ENCODE measurements at regions of chr12 and their contacts with region 1.

Region 1: DNA sequence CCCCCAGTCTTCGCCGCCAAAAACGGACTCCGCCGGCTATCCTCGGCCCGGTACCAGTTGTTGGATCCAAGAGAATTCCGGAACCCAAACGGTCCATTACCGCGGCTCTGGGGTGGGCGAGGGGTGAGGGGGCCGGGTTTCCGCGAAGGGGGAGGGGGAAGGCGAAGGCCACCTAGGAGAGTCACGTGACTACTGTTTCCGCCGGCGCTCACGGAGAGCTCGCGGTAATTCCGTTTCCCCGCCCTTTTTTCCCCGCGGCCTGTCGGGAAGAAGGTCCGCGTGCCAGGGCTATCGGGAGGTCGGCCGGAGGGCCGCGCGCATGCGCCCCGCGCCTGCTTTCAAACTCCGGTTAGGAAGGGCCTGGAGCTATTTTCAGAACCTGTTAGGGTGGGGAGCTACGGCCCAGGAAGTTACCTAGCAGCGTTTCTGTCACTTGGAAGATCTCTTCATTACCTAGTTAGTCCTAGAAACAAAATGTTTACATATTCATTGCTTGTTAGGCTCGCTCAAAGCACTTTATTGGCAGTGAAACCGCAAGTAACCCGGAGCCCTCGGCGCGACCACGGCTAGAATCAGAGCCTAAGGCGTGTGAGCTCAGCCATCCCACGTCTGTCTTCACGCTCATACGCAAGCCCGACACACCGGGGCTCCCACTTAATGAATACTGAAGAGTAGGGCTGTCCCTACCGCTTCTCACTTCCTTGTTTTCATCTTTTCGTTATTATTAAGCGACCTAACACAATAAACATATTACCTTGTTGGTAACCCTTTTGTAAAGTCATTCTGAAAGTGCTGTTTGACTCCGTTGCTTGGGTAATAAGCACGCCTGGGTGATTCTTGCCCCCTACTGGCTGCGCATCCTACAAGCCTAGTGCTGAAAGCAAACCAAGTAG is 624 bp upstream of the SBNO1 start:
- DNase-seq: peak; percentile 99
- H3K4me3 Mint-ChIP-seq: peak overlapping the region; percentile 90
- H3K27ac Mint-ChIP-seq: peak overlapping the region; percentile 99
- H3K4me1 Mint-ChIP-seq: peaks cover 14% of the 10 kb centered on the region
- H3K27me3 Mint-ChIP-seq: no peaks in the 10 kb centered on the region

Region 2: GRCh38 chr12:122526683-122527477 is 838.4 kb before region 1 on chr12 and contains the starts of genes KNTC1 and RSRC2:
- intact Hi-C with region 1: loop called (anchors 2 kb)
- DNase-seq: peak; percentile 99
- H3K4me3 Mint-ChIP-seq: no peak within 1 kb of the TSS
- H3K27ac Mint-ChIP-seq: no peak within 1 kb of the TSS
- H3K4me1 Mint-ChIP-seq: peaks cover 36% of the 10 kb centered on the region
- H3K27me3 Mint-ChIP-seq: no peaks in the 10 kb centered on the region
- total RNA-seq, gene KNTC1: 128 and 129 TPM in 2 replicates
- total RNA-seq, gene RSRC2: 99.7 and 101 TPM in 2 replicates

Region 3: DNA sequence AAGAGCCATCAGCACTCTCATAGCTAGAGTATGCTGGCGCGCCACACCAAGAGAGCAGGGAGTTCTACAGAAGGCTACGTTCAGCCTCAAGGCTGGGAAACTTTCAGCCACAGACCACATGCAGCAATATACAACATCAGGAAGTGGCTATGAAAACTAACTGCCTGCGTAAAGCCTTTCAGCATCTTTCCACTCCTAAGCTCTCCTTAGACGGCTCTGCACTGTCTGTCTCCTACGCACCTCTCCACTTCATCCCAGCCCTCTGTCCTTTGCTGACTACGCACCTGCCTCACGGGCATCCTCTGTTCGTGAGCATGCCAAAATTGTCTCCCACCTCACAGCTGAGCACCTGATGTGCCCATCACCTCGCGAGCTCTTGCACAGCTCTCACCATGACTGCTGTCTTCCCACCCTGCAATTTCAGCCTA is 142.0 kb before region 1 on chr12:
- intact Hi-C with region 1: loop called (anchors 2 kb)
- DNase-seq: peak; percentile 91
- H3K4me3 Mint-ChIP-seq: peak overlapping the region; percentile 75
- H3K27ac Mint-ChIP-seq: peak overlapping the region; percentile 95
- H3K4me1 Mint-ChIP-seq: peaks cover 34% of the 10 kb centered on the region
- H3K27me3 Mint-ChIP-seq: no peaks in the 10 kb centered on the region

Region 4: GRCh38 chr12:123278101-123278627 is 87.1 kb before region 1 on chr12:
- intact Hi-C with region 1: loop called (anchors 2 kb)
- DNase-seq: peak; percentile 69
- H3K4me3 Mint-ChIP-seq: peak overlapping the region; percentile 36
- H3K27ac Mint-ChIP-seq: peak overlapping the region; percentile 83
- H3K4me1 Mint-ChIP-seq: peaks cover 4% of the 10 kb centered on the region
- H3K27me3 Mint-ChIP-seq: no peaks in the 10 kb centered on the region

Region 5: DNA sequence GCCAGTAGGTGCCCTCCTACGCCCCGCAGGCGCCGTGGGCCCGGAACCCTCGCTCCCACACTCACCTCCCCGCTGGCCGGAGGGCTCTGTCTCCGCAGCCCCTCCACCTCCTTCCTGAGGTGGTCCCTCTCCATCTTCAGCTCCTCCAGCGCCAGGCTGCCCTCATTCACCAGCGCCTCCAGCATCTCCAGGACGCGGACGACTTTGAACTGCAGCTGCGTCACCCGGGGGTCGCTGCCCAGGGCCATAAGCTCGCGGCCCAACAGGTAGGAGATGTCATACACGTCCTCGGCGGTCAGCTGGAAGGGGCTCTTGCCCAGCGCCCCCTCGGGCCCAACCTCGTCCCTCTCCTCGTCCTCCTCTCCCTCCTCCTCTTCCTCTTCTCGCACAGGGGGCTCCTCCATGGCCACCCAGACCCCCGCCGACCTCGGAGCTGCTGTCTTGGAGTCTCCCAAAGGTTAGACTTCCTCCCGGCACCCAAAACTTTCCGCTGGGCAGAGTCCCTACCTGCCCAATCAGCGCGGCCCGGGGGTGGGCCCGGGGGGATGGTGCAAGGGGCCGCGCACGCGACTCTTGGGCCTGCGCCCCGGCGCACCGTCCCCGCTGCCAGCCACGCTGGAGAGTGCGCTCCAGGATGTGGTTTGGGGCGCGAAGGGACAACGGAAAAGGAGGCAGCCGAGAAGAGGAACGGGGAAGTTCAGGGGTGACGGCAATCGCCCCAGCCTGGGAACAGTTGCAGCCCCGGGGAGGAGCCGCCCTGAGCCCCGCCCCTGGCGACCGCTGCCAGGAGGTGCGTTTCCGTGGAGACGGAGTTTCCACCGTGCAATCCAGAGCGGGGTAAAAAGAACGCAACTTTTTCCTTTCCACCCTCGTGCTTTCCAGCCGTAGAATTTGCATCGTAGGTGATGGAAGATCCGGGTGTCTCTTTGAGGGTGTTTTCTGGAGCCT is 71.0 kb after region 1 on chr12 and contains the start of gene RILPL2:
- intact Hi-C with region 1: loop called (anchors 2 kb)
- DNase-seq: peak; percentile 98
- H3K4me3 Mint-ChIP-seq: peak within 1 kb of the TSS; percentile 99
- H3K27ac Mint-ChIP-seq: peak within 1 kb of the TSS; percentile 99
- H3K4me1 Mint-ChIP-seq: peaks cover 35% of the 10 kb centered on the region
- H3K27me3 Mint-ChIP-seq: no peaks in the 10 kb centered on the region
- total RNA-seq, gene RILPL2: 17.2 TPM in 2 replicates

Region 6: GRCh38 chr12:123580772-123581171 is 215.5 kb after region 1 on chr12:
- intact Hi-C with region 1: loop called (anchors 1 kb)
- DNase-seq: no peak
- H3K4me3 Mint-ChIP-seq: no peak overlapping the region
- H3K27ac Mint-ChIP-seq: no peak overlapping the region
- H3K4me1 Mint-ChIP-seq: peaks cover 25% of the 10 kb centered on the region
- H3K27me3 Mint-ChIP-seq: no peaks in the 10 kb centered on the region

Measured in activated CD4-positive, alpha-beta T cell treated with anti-CD3 and anti-CD28 coated beads, Interleukin-2, amount 10 ng/mL, durations not matched to agents 24 days and 14 days (primary cell).